ENCODE measurements at regions of chr7 and their contacts with region 1.

Region 1: DNA sequence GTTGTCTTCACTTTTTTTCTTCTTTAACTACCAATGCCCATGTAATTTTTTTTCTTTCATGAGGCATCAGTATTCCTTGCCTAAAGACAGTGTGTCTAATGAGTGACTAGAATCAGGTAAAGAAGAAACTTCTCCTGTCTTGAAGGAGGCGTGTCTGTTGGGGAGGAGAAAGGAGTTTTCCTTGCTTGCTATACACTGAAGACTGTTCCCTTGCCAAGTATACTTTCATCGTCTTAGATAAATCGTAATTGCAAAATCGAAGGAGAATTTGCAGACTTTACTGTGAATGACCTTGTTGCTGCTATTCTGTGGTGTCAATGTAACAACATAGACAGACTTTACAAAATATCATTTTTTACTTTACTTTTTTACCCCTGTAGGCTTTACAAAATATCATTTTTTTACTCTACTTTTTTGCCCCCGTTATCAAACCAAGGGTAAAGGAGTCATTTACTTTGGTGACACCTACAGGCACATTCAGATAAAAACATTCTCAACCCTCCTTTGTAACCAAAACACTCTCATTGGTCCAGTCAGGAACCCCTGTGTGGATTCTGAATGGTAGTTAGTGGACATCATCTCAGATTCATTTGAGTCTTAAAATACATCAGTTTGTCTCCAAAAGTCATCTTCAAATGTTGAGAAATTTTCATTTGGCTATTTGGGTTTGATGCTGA is 232.4 kb downstream of the AHR start:
- DNase-seq: no peak
- ATAC-seq: no peak
- H3K4me3 ChIP-seq: no peak overlapping the region
- H3K27ac ChIP-seq: no peak overlapping the region
- H3K4me1 ChIP-seq: no peaks in the 10 kb centered on the region
- H3K27me3 ChIP-seq: no peaks in the 10 kb centered on the region

Region 2: GRCh38 chr7:15554081-15554480 is 1976.8 kb before region 1 on chr7:
- intact Hi-C with region 1: no loop called
- DNase-seq: no peak
- ATAC-seq: no peak
- H3K4me3 ChIP-seq: no peak overlapping the region
- H3K27ac ChIP-seq: no peak overlapping the region
- H3K4me1 ChIP-seq: no peaks in the 10 kb centered on the region
- H3K27me3 ChIP-seq: no peaks in the 10 kb centered on the region

Region 3: DNA sequence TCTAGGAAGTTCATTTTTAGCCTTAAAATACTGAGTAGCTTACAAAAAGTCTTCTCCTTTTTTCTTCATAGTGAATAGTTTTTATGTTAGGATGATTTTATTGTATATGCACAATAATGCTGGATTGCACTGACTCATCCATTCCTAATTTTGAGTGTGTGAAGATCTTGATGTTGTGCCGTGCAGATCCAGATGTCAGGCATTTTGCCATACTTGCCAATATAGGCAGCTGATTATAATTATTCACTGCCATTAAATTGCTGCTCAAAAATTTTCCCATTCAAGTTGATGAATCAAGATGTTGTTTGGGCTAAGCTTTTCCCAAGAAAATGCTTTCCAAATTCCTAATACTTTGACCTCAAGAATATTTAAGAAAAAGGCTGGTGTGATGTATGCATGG is 14.1 kb before region 1 on chr7:
- intact Hi-C with region 1: loop called in 1 of 2 experiments (anchors 2 kb)
- DNase-seq: no peak
- ATAC-seq: no peak
- H3K4me3 ChIP-seq: no peak overlapping the region
- H3K27ac ChIP-seq: no peak overlapping the region
- H3K4me1 ChIP-seq: no peaks in the 10 kb centered on the region
- H3K27me3 ChIP-seq: no peaks in the 10 kb centered on the region

Region 4: DNA sequence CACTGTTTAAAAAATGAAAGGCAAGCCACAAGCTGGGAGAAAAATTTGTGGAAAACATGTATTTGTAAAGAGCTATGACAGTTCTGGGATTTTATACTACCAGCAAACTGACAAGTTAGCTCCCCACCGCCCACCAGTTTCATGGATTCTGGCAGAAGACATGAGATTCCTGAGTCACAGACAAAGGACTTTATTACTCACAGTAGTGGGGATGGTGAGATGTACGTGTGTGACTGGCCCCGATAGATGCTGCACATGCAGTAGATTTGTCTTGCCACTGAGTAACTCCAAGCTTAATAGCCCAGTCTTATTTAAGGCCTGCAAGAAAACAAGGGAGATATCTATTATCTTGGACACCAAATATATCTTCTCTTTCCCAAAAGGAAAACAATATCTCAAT is 49.3 kb after region 1 on chr7:
- intact Hi-C with region 1: no loop called
- DNase-seq: no peak
- ATAC-seq: no peak
- H3K4me3 ChIP-seq: no peak overlapping the region
- H3K27ac ChIP-seq: no peak overlapping the region
- H3K4me1 ChIP-seq: no peaks in the 10 kb centered on the region
- H3K27me3 ChIP-seq: no peaks in the 10 kb centered on the region

Region 5: DNA sequence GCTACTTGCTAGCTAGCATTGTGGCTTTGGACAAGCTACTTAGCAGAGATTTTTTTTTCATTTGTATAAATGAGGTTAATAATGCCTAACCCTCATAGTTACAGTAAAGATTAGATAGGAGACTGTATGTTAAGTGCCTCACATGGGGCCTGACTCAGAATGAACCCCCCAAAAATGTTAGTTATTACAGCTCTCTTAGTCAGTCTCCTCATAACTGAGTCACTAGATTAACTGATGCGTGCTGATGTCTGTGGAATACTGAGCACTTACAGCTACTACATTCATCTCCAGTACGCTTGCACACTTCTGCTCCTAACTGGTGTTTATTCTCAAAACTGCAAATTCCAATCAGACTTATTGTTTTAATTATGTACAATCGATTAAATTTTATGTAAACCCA is 94.2 kb after region 1 on chr7:
- intact Hi-C with region 1: no loop called
- DNase-seq: no peak
- ATAC-seq: no peak
- H3K4me3 ChIP-seq: no peak overlapping the region
- H3K27ac ChIP-seq: no peak overlapping the region
- H3K4me1 ChIP-seq: peaks cover 3 to 6% of the 10 kb centered on the region in 2 donors
- H3K27me3 ChIP-seq: no peaks in the 10 kb centered on the region

Region 6: DNA sequence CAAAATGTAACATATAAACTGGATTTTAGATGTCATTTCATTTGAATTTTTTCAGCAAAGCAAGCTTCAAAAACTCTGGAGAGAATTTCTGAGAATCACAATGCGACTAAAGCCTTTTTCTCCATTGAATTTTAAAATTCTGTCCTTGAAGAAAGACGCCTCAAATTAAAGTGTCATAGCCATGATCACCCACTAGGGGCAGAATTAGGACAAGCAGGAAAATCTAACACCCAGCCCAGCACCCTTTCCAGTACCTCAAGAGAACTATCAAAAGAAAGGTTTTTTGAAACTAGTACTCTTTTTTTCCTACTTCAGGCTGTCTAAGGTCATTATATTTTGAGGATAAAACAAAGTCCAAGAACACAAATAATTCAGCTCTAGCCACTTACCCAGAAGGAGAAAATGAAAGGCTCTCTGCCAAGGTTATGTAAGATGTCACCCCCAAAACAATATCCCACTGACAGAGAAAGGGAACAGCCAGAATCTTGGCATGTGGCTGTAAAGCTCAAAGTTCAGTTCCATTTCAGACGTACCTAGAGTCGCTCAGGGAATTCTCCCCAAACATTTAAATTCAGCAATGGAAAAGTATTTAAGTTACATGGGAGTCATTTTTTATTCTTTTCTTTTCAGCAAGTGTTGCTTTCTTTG is 110.0 kb after region 1 on chr7:
- intact Hi-C with region 1: loop called in 1 of 2 experiments (anchors 10 kb)
- DNase-seq: no peak
- ATAC-seq: no peak
- H3K4me3 ChIP-seq: no peak overlapping the region
- H3K27ac ChIP-seq: no peak overlapping the region
- H3K4me1 ChIP-seq: no peaks in the 10 kb centered on the region
- H3K27me3 ChIP-seq: no peaks in the 10 kb centered on the region

Region 7: GRCh38 chr7:18250133-18250532 is 719.3 kb after region 1 on chr7:
- intact Hi-C with region 1: no loop called
- DNase-seq: no peak
- ATAC-seq: no peak
- H3K4me3 ChIP-seq: no peak overlapping the region
- H3K27ac ChIP-seq: no peak overlapping the region
- H3K4me1 ChIP-seq: no peaks in the 10 kb centered on the region
- H3K27me3 ChIP-seq: no peaks in the 10 kb centered on the region

Measured in aorta (tissue), 5 donors.